ENCODE measurements at regions of chr2 and their contacts with region 1.

Region 1: GRCh38 chr2:208511016-208511415 is 104.4 kb downstream of the PTH2R start:
- DNase-seq: no peak
- ATAC-seq: no peak
- H3K4me3 ChIP-seq: no peak overlapping the region
- H3K4me3 Mint-ChIP-seq: no peak overlapping the region
- H3K27ac ChIP-seq: no peak overlapping the region
- H3K27ac Mint-ChIP-seq: no peak overlapping the region
- H3K4me1 ChIP-seq: no peaks in the 10 kb centered on the region
- H3K4me1 Mint-ChIP-seq: no peaks in the 10 kb centered on the region
- H3K27me3 ChIP-seq: no peaks in the 10 kb centered on the region
- H3K27me3 Mint-ChIP-seq: no peaks in the 10 kb centered on the region

Region 2: DNA sequence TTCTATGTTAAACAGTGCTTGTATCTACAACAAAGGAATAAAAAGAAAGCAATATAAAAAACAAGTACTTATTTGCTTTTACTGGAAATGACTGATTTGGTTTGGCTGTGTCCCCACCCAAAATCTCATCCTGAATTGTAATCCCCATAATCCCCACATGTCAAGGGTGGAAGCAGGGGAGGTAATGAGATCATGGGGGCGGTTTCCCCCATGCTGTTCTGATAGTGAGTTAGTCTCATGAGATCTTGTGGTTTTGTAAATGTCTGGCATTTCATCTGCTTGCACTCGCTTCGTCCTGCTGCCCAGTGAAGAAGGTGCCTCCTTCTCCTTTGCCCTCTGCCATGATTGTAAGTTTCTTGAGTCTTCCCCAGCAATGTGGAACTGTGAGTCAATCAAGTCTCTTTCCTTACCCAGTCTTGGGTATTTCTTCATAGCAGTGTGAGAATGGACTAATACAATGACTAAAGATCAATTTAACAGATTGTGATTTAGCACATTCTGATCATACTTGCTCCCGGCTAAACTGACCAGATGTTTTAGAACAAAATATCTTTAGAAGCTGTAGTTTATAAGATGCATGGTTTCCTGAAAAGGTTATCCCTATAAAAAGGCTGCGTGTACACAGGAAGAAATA is 84.5 kb before region 1 on chr2:
- CTCF ChIA-PET with region 1: interaction called in 1 of 2 experiments, 10 read pairs
- POLR2A ChIA-PET with region 1: no interaction called
- DNase-seq: no peak
- ATAC-seq: no peak
- H3K4me3 ChIP-seq: no peak overlapping the region
- H3K4me3 Mint-ChIP-seq: no peak overlapping the region
- H3K27ac ChIP-seq: no peak overlapping the region
- H3K27ac Mint-ChIP-seq: no peak overlapping the region
- H3K4me1 ChIP-seq: no peaks in the 10 kb centered on the region
- H3K4me1 Mint-ChIP-seq: no peaks in the 10 kb centered on the region
- H3K27me3 ChIP-seq: no peaks in the 10 kb centered on the region
- H3K27me3 Mint-ChIP-seq: peaks cover 2 to 5% of the 10 kb centered on the region in 2 donors

Region 3: DNA sequence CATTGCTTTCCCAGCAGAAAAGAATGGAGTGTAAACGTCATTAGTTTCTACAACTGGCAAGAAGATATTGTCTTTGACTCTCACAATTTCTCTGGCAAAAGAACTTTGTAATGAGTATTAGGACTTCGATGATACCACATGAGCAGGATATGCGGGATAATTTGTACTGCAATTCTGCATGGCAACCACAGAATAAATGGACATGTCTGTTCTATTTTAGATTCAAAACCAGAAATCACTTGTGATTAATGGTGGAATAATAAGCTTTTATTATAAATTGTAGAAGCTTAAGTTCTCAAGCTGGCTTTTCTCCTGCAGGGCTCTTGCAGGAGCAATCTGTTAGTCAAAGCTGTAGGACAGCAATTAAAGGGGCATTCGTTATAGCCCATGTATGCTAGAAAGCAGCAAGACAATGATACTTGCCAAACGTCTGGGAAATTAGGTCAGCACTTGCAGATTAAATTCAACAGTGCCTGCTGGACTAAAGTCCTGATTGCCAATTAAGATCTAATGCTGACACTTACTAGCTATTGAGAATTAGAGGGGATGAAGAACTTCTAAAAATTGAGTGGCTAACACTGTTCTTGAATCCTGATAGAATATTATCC is 73.5 kb after region 1 on chr2:
- CTCF ChIA-PET with region 1: no interaction called
- POLR2A ChIA-PET with region 1: no interaction called
- DNase-seq: no peak
- ATAC-seq: no peak
- H3K4me3 ChIP-seq: no peak overlapping the region
- H3K4me3 Mint-ChIP-seq: no peak overlapping the region
- H3K27ac ChIP-seq: no peak overlapping the region
- H3K27ac Mint-ChIP-seq: no peak overlapping the region
- H3K4me1 ChIP-seq: no peaks in the 10 kb centered on the region
- H3K4me1 Mint-ChIP-seq: no peaks in the 10 kb centered on the region
- H3K27me3 ChIP-seq: no peaks in the 10 kb centered on the region
- H3K27me3 Mint-ChIP-seq: no peaks in the 10 kb centered on the region

Measured in T-cell (primary cell).